ENCODE measurements at regions of chr7 and their contacts with region 1.

Region 1: GRCh38 chr7:5780801-5781496 is 514 bp downstream of the RNF216 start:
- DNase-seq: no peak
- ATAC-seq: peak; percentile 68
- H3K4me3 ChIP-seq: peak overlapping the region; percentile 86
- H3K27ac ChIP-seq: peak overlapping the region; percentile 58
- H3K4me1 ChIP-seq: peaks cover 6% of the 10 kb centered on the region; the same call in 1 of the 2 replicates
- H3K27me3 ChIP-seq: no peaks in the 10 kb centered on the region
- CTCF ChIP-seq: no peak
- EP300 ChIP-seq: no peak
- POLR2A ChIP-seq: no peak
- RAD21 ChIP-seq: no peak

Region 2: GRCh38 chr7:5793361-5794072 is 12.6 kb after region 1 on chr7:
- CTCF ChIA-PET with region 1: interaction called, 10 read pairs
- POLR2A ChIA-PET with region 1: interaction called, 3 read pairs
- RAD21 ChIA-PET with region 1: no interaction called
- SMC1A ChIA-PET with region 1: no interaction called
- in situ Hi-C with region 1: no loop called
- intact Hi-C with region 1: no loop called
- DNase-seq: no peak
- ATAC-seq: no peak
- H3K4me3 ChIP-seq: no peak overlapping the region
- H3K27ac ChIP-seq: no peak overlapping the region
- H3K4me1 ChIP-seq: no peaks in the 10 kb centered on the region
- H3K27me3 ChIP-seq: no peaks in the 10 kb centered on the region
- CTCF ChIP-seq: no peak
- EP300 ChIP-seq: no peak
- POLR2A ChIP-seq: no peak
- RAD21 ChIP-seq: no peak

Region 3: DNA sequence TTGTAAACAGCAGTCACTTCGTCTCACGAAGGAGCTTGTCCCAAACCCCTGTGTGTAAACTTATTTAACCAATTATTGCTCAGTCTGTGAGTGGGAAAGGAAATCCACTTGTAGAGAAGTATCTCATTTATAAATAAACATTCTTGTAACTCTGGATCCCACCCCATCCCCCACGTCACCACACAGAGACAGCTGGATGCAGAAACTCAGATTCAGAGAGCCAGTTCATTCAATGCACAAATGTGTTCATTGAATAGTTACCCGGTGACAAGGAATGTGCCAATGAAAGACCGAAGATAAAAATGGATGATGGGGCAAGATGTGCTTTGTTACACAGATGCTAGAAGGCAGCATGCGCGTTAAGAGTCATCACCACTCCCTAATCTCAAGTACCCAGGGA is 91.4 kb after region 1 on chr7:
- CTCF ChIA-PET with region 1: no interaction called
- POLR2A ChIA-PET with region 1: no interaction called
- RAD21 ChIA-PET with region 1: no interaction called
- SMC1A ChIA-PET with region 1: no interaction called
- in situ Hi-C with region 1: no loop called
- intact Hi-C with region 1: no loop called
- DNase-seq: no peak
- ATAC-seq: no peak
- H3K4me3 ChIP-seq: no peak overlapping the region
- H3K27ac ChIP-seq: no peak overlapping the region
- H3K4me1 ChIP-seq: no peaks in the 10 kb centered on the region
- H3K27me3 ChIP-seq: no peaks in the 10 kb centered on the region
- CTCF ChIP-seq: no peak
- EP300 ChIP-seq: no peak
- POLR2A ChIP-seq: no peak
- RAD21 ChIP-seq: no peak